PC-9 (cell line): ENCODE measurements at regions of chr2 and their contacts with region 1.

Region 1: GRCh38 chr2:43075054-43075593 is 151.3 kb downstream of the ZFP36L2 start:
- DNase-seq: peak; percentile 89 to 97
- H3K4me3 ChIP-seq: peak overlapping the region; percentile 55
- H3K27ac ChIP-seq: peak overlapping the region; percentile 93
- H3K4me1 ChIP-seq: peaks cover 71% of the 10 kb centered on the region
- H3K27me3 ChIP-seq: no peaks in the 10 kb centered on the region
- CTCF ChIP-seq: no peak

Region 2: DNA sequence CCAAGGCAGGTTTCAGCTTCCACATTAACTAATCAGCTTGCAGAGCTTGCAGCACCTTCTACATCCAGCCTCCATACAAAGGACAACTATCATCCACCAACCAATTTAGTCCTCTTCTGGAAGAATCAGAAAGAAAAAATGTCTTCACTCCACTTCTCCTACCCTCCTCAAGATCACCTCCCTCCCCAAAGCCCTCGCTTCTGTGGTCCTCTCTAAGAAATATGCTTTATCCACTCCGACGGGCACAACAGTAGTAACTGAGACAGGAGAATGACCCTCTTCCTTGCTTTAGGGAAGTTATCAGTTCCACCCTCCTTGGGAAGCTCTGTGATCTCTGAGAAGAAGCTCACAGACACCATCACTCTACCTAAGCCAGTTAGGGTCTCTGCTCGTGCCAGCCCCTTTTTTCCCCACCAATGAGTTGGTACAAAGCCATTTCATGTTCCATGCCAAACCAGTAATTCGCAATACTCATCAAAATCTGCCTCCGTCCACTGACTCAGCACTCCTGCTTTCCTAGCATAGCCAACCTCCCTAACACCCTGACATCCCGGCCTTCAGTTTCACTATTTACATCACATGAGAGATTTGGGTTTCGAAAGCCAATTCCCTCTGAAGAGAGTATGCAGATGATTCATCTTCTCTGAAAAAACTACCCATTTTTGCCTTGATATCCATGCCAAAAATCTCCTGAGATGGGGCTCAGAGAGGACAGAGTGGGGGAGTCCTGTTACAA is 1141.4 kb before region 1 on chr2:
- CTCF ChIA-PET with region 1: no interaction called
- POLR2A ChIA-PET with region 1: no interaction called
- intact Hi-C with region 1: loop called (anchors 5 kb)
- DNase-seq: peak in 1 of 2 experiments; percentile 95
- H3K4me3 ChIP-seq: no peak overlapping the region
- H3K27ac ChIP-seq: peak overlapping the region; percentile 87
- H3K4me1 ChIP-seq: peaks cover 86% of the 10 kb centered on the region
- H3K27me3 ChIP-seq: no peaks in the 10 kb centered on the region
- CTCF ChIP-seq: no peak

Region 3: DNA sequence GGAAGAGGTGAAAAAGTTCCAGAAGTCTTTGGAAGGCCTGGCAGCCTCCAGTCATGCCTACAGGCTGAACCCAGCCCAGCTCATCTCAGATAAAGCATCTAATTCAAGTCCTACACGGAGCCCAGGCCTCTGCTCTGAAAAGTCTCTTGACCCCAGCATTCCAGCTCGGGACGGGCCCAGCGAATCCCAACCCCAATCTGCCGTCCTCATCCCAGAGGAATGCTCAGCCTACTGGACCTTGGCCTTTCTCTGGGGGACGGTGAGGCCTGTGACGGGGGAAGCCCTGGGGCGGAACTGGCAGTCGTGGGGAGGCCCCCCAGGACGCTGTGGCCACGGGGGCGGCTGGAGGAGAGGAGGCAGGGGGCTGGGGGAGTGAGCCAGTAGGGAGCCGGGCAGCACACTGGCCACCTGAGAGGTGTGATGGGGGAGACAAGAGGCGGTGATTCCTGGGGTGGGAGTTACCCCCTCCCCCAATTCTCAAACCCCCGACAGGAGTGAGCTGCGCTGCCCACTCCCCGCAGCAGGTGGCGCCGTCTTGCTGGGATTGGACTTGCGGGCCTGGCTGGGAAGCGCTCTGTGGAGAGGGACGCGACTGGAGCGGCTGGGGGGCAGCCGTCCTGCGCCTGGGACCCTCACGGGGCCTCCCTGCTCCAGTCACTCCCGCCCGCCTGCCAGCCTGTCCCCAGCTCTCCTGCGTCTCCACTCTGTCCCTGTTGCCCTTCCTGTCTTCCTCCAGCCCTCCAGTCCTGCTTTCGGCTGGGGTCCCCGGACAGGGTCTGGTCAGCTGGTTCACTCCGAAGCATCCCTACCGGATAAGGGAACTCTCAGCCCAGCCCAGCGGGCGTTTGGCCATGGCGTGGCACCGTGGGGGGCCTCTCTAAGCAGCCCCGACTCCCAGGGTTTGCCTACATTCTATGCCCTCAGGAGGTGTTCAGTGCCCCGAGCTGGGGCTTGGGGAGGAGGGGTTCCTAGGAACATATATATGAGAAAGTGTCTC is 100.1 kb before region 1 on chr2:
- CTCF ChIA-PET with region 1: interaction called, 4 read pairs
- POLR2A ChIA-PET with region 1: no interaction called
- intact Hi-C with region 1: loop called (anchors 5 kb)
- DNase-seq: peak in 1 of 2 experiments; percentile 76
- H3K4me3 ChIP-seq: no peak overlapping the region
- H3K27ac ChIP-seq: no peak overlapping the region
- H3K4me1 ChIP-seq: peaks cover 16% of the 10 kb centered on the region
- H3K27me3 ChIP-seq: no peaks in the 10 kb centered on the region
- CTCF ChIP-seq: peak; percentile 97

Region 4: GRCh38 chr2:43086451-43087221 is 11.5 kb after region 1 on chr2:
- CTCF ChIA-PET with region 1: interaction called, 4 read pairs
- POLR2A ChIA-PET with region 1: no interaction called
- intact Hi-C with region 1: loop called (anchors 1 kb)
- DNase-seq: peak; percentile 88 to 100
- H3K4me3 ChIP-seq: no peak overlapping the region
- H3K27ac ChIP-seq: peak overlapping the region; percentile 85
- H3K4me1 ChIP-seq: peaks cover 68% of the 10 kb centered on the region
- H3K27me3 ChIP-seq: no peaks in the 10 kb centered on the region
- CTCF ChIP-seq: no peak

Region 5: DNA sequence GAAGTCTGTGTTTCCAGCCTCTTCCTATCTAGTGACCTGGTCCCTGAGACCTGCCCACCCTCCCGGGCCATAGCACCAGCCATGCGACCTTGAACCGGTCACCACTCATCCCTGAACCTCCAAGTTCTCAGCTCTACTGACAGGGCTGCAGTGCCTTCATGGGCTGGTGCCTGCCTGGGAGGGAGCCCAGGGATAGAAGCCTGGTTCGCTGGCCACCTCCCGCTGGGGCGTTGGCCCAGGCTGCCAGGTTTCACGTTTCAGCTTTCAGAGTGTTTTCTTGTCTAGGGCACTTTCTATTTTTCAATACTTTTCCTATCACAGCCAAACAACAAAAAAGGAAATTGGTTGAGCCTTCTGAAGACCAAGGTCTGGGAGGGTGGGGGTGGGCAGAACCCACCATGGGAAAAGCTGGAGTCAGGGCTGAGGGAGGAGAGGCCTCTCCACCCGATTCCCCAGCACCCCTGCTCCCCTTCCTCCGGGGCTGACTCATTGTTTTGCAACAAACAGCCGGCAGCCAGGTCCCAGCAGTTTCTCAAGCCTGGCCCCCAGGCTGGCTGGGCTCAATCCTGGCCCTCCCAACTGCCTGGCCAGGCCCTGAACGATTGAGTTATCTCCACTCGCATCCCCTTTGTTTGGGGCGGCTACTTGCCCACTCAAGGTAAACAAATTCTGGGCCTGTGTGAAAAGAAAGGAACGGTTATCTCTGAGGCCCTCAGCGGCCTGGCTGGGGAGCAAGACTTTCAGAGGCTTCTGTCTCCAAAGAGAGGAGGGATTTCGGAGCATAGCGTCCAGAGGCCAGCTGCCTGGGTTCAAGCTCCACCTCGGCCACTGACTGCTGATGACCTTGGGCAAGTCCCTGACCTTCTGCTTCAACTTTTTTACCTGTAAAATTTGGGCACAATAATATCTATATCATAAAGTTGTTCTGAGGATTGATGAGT is 103.7 kb after region 1 on chr2:
- CTCF ChIA-PET with region 1: interaction called, 3 read pairs
- POLR2A ChIA-PET with region 1: interaction called, 4 read pairs
- intact Hi-C with region 1: loop called (anchors 1 kb)
- DNase-seq: peak; percentile 90 to 91
- H3K4me3 ChIP-seq: peak overlapping the region; percentile 33; the same call in 1 of the 2 replicates
- H3K27ac ChIP-seq: peak overlapping the region; percentile 88
- H3K4me1 ChIP-seq: peaks cover 95% of the 10 kb centered on the region
- H3K27me3 ChIP-seq: no peaks in the 10 kb centered on the region
- CTCF ChIP-seq: no peak

Region 6: GRCh38 chr2:43484323-43484930 is 409.3 kb after region 1 on chr2:
- CTCF ChIA-PET with region 1: no interaction called
- POLR2A ChIA-PET with region 1: no interaction called
- intact Hi-C with region 1: loop called (anchors 1 kb)
- DNase-seq: peak in 1 of 2 experiments; percentile 78
- H3K4me3 ChIP-seq: no peak overlapping the region
- H3K27ac ChIP-seq: no peak overlapping the region; the same call in 1 of the 2 replicates
- H3K4me1 ChIP-seq: peaks cover 13% of the 10 kb centered on the region
- H3K27me3 ChIP-seq: no peaks in the 10 kb centered on the region
- CTCF ChIP-seq: peak; percentile 93

Region 7: DNA sequence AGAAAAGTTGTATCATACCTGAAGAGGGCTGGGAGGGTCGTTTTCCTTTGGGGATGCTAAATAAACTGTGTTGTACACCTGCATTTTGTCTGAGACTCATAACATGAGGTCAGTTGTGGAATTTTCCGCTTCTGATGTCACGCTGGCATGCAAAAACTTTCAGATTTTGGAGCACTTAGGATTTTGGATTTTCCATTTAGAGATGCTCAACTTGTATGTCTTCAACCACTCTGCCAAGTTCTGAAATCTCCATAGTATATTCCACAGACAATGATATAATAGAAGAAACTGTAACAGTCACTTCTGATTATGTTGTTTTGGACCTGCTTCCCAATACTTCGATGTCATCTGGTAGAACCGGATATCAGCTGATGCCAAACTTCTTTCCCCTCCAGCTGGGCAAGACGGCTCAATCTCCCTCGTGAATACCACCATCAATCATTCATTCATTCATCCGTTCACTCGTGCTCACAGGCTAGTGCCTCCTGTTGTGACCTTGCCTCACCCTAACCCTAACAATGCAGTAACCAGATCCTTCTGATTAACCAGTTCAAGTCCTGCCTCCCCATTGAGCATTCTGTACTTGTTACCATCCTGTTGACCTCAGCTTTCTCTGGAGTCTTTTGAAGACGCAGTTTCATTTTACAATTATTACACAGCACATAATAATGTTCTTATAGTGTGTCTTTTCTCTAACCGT is 556.6 kb after region 1 on chr2:
- CTCF ChIA-PET with region 1: no interaction called
- POLR2A ChIA-PET with region 1: no interaction called
- intact Hi-C with region 1: no loop called
- DNase-seq: no peak
- H3K4me3 ChIP-seq: no peak overlapping the region
- H3K27ac ChIP-seq: no peak overlapping the region
- H3K4me1 ChIP-seq: peaks cover 23% of the 10 kb centered on the region
- H3K27me3 ChIP-seq: no peaks in the 10 kb centered on the region
- CTCF ChIP-seq: no peak